HepG2 (cell line): ENCODE measurements at regions of chr7 and their contacts with region 1.

Region 1: DNA sequence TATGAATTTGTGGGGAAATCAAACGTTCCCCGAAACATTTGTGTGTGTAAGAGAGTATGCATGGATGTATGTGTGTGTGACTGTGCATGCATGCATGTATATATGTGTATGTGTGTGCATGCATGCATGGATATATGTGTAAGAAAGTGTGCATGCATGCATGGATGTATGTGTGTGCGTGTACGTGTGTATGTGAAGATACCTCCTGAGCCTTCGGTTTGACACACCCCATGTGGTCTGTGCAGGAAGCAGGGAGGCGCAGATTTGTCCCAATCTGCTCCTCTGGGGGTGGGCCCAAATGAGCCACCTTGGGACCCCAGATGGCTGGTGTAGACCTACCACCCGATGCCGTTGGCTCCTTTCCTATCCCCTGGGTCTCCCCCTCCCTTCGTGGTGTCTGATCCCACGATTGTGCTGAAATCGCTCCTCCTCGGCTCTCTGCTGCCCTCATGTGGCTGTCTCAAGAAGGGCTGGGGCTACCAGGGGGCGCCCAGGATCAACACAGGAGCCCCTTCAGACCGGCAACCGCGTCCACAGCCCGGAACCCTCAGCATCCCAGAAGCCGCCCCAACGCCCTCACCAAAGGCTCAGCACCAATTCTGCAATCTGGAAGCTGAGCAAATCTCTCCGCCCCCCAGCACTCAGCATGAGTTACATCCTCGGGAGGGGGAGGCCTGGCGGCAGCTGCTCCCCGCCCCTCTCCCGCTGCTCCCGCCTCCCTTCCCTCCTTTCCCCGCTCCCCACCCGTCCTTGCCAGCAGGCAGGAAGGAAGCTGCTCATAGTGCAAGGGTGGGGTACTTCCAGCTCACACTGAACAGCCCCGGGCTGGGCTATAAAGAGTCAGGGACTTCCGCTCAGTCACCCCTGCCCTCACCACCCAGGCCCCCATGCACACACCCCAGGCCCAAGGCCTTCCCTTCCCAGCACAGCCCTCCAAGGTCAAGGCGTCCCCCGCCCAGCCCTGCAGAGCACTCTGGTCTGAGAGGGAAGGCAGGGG is 2.3 kb upstream of the NOS3 start:
- DNase-seq: no peak
- ATAC-seq: peak; percentile 56
- H3K4me3 ChIP-seq: no peak overlapping the region
- H3K27ac ChIP-seq: no peak overlapping the region
- H3K4me1 ChIP-seq: no peaks in the 10 kb centered on the region
- H3K27me3 ChIP-seq: peaks cover 4 to 42% of the 10 kb centered on the region in 2 experiments; a peak in 4 of 5 replicates
- CTCF ChIP-seq: peak; percentile 73
- EP300 ChIP-seq: no peak
- POLR2A ChIP-seq: no peak
- RAD21 ChIP-seq: peak; percentile 76

Region 2: DNA sequence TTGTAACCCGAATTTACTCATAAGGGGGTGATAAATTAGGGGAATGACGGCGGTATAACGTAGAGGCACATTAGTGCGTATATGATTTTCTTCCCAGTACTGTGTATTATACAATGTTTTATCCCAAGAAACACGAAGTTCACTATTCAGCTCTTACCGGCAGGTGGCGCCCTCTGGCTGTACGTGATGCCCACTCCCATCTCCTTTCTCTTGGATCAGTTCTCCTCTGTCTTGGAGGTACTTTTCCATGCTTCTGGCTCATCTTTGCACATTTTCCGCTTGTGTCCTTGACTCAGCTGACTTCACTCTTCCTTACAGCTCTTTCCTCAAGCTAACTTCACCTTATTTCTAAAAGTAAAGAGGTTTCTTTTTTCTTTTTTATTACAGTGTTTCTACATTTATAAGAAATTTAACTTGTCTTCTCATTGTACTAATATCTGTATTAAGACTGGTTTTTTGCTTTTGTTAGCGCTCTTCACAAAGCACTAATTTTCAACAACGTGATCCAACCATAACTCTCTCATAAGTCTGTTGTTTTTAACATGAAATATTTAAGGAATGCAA is 209.7 kb before region 1 on chr7:
- CTCF ChIA-PET with region 1: no interaction called
- POLR2A ChIA-PET with region 1: no interaction called
- in situ Hi-C with region 1: no loop called
- intact Hi-C with region 1: loop called (anchors 2 kb)
- DNase-seq: peak; percentile 46
- ATAC-seq: peak; percentile 84
- H3K4me3 ChIP-seq: no peak overlapping the region
- H3K27ac ChIP-seq: no peak overlapping the region
- H3K4me1 ChIP-seq: peaks cover 24% of the 10 kb centered on the region
- H3K27me3 ChIP-seq: no peaks in the 10 kb centered on the region
- CTCF ChIP-seq: peak; percentile 90
- EP300 ChIP-seq: no peak
- POLR2A ChIP-seq: no peak
- RAD21 ChIP-seq: peak; percentile 69

Region 3: DNA sequence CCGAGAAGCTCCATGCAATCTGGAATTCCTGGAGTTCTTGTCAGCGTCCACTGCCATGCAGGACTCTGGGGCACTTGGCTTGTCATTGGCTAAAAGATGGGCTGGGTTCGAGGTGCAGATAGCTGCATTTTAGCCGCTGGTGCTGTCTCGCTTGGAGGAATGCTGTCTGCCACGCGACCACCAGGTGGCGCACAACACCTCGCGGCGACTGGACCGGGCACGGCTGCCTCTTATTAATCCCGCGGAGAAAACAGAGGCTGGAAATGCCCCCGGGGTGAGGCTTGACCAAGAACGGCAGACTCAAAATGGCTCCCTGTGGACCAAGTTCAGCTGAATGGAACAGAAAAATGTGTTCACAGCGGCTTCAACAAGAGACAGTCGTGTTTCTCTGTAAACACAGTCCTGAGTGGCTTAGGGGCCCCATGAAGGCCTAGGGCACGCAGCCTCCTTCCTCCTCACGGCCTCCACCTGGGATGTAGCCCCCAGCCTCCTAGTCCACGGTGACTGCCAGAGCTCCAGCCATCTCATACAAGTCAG is 90.0 kb before region 1 on chr7:
- CTCF ChIA-PET with region 1: interaction called, 13 read pairs
- POLR2A ChIA-PET with region 1: no interaction called
- in situ Hi-C with region 1: loop called (anchors 5 kb)
- intact Hi-C with region 1: loop called (anchors 1 kb)
- DNase-seq: peak; percentile 16
- ATAC-seq: peak; percentile 79
- H3K4me3 ChIP-seq: no peak overlapping the region
- H3K27ac ChIP-seq: no peak overlapping the region
- H3K4me1 ChIP-seq: peaks cover 18% of the 10 kb centered on the region
- H3K27me3 ChIP-seq: peaks cover 1 to 33% of the 10 kb centered on the region in 2 experiments; a peak in 3 of 5 replicates
- CTCF ChIP-seq: peak; percentile 92
- EP300 ChIP-seq: no peak
- POLR2A ChIP-seq: no peak
- RAD21 ChIP-seq: peak; percentile 75

Region 4: DNA sequence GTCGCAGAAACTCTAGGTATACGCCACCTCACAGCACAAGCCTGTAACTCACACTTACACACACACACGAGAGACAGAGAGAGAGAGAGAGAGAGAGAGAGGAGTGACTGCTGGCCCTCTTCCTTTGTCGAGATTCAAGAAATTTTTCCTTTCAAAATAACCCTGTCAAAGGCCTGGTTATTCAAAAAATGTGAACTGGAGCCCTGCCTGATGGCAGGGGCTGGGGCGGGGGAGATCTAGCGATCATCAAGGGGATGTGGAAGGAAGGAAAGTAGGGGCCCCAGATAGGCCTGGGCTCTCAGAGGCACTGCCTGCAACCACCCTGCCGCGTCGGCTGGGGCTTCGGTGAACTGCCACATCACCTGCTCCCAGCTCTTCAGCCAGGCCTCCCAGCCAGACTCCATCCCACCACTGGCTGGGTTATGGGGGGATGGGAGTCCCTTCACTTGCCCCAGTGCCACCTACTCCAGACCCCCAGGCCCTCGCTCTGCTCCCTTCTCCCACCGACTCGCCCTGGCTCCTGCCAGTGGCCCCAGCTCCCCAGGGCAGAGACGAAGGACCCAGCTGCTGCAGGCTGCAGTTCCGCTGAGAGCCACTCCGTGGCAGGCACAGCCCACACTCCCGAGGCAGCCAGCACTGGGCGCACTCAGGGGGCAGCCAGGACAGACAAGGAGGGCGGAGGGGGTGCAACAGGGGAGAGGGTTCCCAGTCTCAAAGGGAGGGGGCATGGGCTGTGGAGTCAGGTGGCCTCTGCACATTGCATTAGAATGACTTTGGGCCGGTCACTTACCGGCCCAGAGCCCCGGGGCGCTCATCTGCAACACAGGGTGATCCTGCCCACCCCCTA is 25.8 kb before region 1 on chr7:
- CTCF ChIA-PET with region 1: interaction called, 13 read pairs
- POLR2A ChIA-PET with region 1: no interaction called
- in situ Hi-C with region 1: no loop called
- intact Hi-C with region 1: loop called (anchors 1 kb)
- DNase-seq: peak; percentile 18
- ATAC-seq: peak; percentile 90
- H3K4me3 ChIP-seq: no peak overlapping the region
- H3K27ac ChIP-seq: no peak overlapping the region
- H3K4me1 ChIP-seq: no peaks in the 10 kb centered on the region
- H3K27me3 ChIP-seq: peaks cover 5 to 49% of the 10 kb centered on the region in 2 experiments
- CTCF ChIP-seq: peak; percentile 95
- EP300 ChIP-seq: no peak
- POLR2A ChIP-seq: no peak
- RAD21 ChIP-seq: peak; percentile 84